HEK293 (cell line): ENCODE measurements at regions of chr1 and their contacts with region 1.

Region 1: DNA sequence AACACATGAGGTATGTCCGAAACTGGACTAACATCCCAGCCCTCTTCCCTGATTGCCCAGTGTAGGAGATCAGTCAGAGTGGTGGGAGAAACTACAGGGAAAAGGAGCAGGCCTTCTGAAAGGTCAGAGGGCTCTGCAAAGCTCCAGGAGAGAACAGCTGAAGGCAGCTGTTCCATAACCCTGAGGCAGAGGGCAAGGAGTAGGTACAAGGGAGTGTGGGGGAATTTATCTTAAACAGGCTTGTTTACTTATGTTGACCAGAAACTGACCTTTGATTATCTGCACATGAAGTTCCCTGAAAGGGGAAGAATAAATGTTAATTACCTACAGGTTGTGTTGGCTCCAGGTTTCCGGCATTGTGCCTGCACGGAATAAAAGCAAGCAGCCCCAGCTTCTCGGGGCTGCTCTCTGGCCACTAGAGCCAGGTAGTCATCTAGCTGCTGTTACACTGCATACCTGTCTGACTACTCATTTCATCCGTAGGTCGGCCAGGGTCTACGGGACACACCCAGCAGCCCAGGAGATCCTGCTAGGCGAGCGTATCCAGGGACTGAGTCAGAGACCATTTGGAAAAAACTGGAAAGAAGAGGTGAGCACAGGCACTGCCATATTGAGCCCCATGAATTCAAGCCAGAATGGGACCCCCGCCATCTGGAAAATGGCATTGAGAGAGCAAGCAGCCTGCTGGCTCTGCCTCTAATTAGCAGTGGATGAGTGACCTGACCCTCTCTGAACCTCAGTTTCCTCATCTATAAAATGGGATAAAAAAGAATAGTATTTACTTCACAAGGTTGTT is 14.9 kb upstream of the PAQR7 start:
- H3K4me3 ChIP-seq: no peak overlapping the region
- H3K27ac ChIP-seq: no peak overlapping the region
- H3K4me1 ChIP-seq: no peaks in the 10 kb centered on the region
- CTCF ChIP-seq: no peak

Region 2: GRCh38 chr1:25642574-25643108 is 247.8 kb before region 1 on chr1:
- CTCF ChIA-PET with region 1: no interaction called
- POLR2A ChIA-PET with region 1: no interaction called
- H3K4me3 ChIP-seq: no peak overlapping the region
- H3K27ac ChIP-seq: no peak overlapping the region
- H3K4me1 ChIP-seq: no peaks in the 10 kb centered on the region
- CTCF ChIP-seq: no peak

Region 3: GRCh38 chr1:25711555-25712298 is 178.7 kb before region 1 on chr1:
- CTCF ChIA-PET with region 1: no interaction called
- POLR2A ChIA-PET with region 1: no interaction called
- H3K4me3 ChIP-seq: no peak overlapping the region
- H3K27ac ChIP-seq: no peak overlapping the region
- H3K4me1 ChIP-seq: no peaks in the 10 kb centered on the region
- CTCF ChIP-seq: no peak

Region 4: DNA sequence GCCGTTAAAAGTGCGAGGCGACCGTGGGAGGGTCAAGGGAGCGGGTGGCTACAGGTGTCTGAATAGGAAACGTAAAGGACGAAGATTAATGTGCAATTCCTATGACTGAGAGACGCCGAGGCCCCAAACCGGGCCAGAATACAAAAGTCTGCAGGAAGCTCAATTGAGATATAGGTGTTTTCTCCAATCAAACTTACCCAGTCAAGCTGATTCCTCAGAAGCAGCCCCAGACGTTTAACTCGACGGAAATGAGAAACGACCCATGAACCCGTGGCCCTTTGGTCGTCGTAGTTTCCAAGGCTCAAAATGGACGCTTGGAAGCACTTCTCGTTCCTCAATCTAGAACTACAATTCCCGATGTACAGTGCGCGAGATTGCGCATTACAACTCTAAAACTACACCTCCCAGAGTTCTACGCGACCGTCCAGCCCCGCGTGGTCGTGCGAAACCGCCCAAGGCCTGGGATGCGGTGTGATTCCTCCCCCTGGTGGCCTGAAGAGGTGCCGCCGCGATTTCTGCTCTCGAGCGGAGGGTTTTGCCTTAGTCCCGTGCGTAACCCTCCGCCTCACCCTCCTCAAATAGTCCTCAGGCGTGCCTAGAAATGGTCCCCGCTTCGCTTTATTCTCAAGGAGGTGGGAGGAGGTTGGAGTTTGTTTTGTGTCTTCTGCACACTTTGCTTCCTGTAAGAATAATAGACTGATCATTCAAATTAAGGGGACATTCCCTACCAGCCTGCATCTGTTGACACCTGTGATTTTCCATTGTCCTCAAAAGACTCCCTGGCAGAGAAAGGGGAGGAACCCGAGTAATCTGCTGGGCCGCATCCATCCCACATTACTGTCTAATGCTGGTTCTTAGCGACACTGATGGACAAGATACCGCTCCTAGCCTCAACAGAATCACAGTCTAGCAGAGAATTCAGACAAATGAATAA is 107.7 kb after region 1 on chr1 and contains the start of gene PAFAH2:
- CTCF ChIA-PET with region 1: interaction called, 86 read pairs
- POLR2A ChIA-PET with region 1: interaction called, 30 read pairs
- H3K4me3 ChIP-seq: peak within 1 kb of the TSS; percentile 62
- H3K27ac ChIP-seq: peak within 1 kb of the TSS; percentile 4; the same call in 1 of the 2 replicates
- H3K4me1 ChIP-seq: no peaks in the 10 kb centered on the region
- CTCF ChIP-seq: peak; percentile 100